ENCODE measurements at regions of chr20 and their contacts with region 1.

Region 1: DNA sequence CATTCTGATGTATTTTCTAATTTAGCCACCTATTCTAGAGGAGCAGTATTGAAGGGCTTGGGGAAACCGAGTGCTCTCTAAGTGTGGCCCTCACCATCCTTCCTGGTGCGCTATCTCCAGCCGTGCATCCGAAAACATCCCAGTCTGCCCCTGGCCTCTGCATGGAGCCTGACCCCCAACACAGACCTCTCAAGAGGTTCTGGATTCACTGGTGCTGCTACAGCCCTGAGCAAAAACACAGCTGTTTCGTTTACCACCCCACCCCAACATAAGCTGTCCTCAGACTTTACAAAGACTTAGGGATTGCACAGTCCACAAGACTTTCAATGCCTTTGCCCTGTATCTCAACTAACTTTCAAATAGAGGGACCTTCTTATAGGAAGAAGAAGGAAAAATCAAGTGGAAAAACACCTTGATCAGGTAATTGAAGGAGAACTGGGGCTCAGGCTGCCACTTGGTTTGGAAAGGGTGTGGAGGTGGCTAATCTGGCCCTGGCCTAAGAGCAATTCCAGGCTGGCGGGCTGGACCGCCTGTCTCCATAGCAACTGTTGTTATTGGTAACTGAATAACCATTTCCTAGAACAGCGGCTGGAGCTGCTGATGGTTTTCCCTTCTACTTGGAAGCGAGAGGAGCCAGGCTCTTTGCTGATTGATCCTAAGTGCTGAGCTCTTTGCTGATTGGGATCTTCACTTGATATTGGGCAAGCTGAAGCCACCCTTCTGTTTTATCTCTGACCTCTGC is 90.2 kb upstream of the TOX2 start:
- DNase-seq: no peak
- CTCF ChIP-seq: no peak

Region 2: DNA sequence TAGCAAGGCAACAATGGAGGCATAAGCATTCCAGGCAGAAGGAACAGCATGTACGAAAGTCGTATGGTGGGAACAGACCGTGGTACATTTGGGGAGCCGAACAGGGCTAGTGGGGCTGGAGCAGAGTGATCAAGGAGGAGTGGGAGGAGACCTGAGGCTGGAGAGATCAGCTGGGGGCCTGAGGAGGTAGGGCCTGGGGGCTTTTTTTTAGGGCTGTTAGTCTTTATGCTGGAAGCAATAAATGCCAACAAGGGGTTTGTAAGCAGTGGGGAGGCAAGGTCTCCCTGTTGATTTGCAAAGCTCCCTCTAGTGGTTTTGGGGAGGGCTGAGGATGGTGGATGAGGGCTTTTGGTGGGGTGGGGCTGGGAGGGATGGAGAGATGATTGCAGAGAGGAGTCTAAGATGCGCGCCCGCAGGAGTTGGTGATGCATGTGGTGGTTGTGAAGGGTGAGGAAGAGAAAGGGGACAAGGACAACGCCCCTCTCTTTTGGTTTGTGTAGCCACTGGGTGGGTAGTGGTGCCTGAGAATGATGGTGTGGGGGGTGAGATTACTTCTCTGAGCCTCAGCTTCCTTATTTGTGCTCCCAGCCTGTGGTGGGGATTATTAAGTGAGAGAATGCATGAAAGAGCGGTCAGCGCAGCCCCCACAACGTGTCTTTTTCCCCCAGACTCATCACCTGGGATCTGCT is 16.0 kb after region 1 on chr20:
- CTCF ChIA-PET with region 1: interaction called, 15 read pairs
- POLR2A ChIA-PET with region 1: no interaction called
- DNase-seq: peak; percentile 75
- CTCF ChIP-seq: peak; percentile 45

Region 3: DNA sequence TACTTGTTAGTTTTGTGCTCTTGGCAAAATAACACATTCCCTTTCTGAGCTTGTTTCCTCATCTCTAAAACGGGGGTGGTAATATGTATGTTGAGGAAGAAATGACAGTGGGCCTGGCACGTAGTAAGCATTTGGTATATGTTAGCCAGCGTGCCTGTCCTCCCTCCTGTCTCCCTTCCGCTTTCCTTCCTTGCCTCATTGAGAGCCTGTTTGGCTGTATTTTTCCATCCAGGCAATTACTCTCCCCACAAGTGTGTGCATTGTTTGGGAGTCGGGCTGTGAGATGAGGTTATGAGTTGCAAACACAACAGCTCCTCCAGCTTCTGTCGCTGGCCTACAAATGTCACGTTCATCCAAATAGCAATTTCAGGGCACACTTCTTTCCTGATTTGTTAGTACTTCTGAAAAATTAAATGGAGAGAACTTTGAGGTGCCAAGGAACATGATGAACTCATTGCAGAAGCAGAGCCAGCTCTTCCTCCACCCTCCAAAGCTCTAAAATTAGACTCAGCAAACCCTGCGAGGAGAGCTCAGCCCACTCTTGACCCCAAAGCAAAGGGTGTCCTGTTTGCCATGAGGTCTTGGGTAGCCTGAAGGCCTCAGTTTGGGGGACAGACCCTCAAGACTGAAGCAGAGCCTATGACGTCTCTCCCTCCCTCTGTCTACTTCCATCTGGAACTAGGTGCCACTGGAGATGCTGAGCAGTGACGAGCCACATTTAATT is 39.5 kb after region 1 on chr20:
- CTCF ChIA-PET with region 1: no interaction called
- POLR2A ChIA-PET with region 1: no interaction called
- DNase-seq: no peak
- CTCF ChIP-seq: no peak

Region 4: GRCh38 chr20:43963872-43964791 is 139.7 kb after region 1 on chr20:
- CTCF ChIA-PET with region 1: no interaction called
- POLR2A ChIA-PET with region 1: no interaction called
- DNase-seq: no peak
- CTCF ChIP-seq: no peak

Measured in GM10248 (cell line).